Sigmoid colon (tissue), 7 donors: ENCODE measurements at regions of chr1 and their contacts with region 1.

Region 1: GRCh38 chr1:168603501-168604110 is 27.2 kb downstream of the XCL1 start:
- DNase-seq: peak; percentile 88
- H3K4me3 ChIP-seq: no peak overlapping the region
- H3K27ac ChIP-seq: peak overlapping the region in 1 of 4 donors; percentile 14
- H3K4me1 ChIP-seq: peaks cover 0 to 45% (median 15%) of the 10 kb centered on the region in 4 donors
- H3K27me3 ChIP-seq: no peaks in the 10 kb centered on the region
- CTCF ChIP-seq: peak; percentile 72 to 85 (median 79)
- EP300 ChIP-seq: no peak
- POLR2A ChIP-seq: no peak

Region 2: DNA sequence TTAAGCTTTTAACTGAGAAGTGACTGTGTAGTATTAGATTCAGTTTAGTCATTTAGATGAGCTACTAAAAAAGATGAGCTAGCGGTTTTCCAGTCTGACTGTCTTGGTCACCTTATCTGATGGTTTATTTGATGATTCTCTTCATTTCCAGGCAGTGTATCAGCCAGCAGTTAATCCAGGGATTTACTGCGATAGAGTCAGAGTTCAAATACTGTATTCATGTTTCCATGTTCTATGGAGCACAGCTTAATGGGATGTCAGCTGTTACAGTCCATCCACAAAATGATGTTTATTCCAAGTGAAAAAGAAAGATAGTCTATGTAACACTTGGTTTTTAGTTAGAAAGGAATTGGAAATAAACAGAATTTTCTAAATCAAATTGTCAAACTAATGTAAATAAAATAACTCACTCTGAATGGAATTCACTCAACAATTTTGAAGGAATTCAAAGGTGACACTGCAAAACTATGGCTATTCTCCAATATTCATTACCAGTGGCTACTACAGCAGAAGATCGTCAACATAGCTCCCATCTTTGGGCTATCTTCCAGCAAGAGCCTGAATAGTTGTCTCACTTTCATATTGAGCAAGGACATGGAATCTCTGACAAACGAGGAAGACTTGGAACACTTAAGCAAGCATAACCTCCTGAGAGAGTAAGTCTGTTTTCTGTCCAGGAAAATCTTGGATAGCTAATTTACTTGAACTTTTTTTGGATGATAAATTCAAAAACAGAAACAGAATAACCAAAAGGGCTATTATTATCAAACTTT is 180.0 kb after region 1 on chr1:
- intact Hi-C with region 1: loop called (anchors 10 kb)
- DNase-seq: peak; percentile 65
- H3K4me3 ChIP-seq: no peak overlapping the region
- H3K27ac ChIP-seq: peak overlapping the region; percentile 34 to 62 (median 58)
- H3K4me1 ChIP-seq: peaks cover 0 to 18% (median 7%) of the 10 kb centered on the region in 4 donors
- H3K27me3 ChIP-seq: no peaks in the 10 kb centered on the region
- CTCF ChIP-seq: no peak
- EP300 ChIP-seq: no peak
- POLR2A ChIP-seq: no peak

Region 3: GRCh38 chr1:168932539-168932938 is 328.9 kb after region 1 on chr1:
- intact Hi-C with region 1: no loop called
- DNase-seq: no peak
- H3K4me3 ChIP-seq: no peak overlapping the region
- H3K27ac ChIP-seq: no peak overlapping the region
- H3K4me1 ChIP-seq: no peaks in the 10 kb centered on the region
- H3K27me3 ChIP-seq: no peaks in the 10 kb centered on the region
- CTCF ChIP-seq: no peak
- EP300 ChIP-seq: no peak
- POLR2A ChIP-seq: no peak

Region 4: GRCh38 chr1:169201084-169201619 is 597.5 kb after region 1 on chr1:
- intact Hi-C with region 1: loop called (anchors 10 kb)
- DNase-seq: no peak
- H3K4me3 ChIP-seq: no peak overlapping the region
- H3K27ac ChIP-seq: no peak overlapping the region
- H3K4me1 ChIP-seq: no peaks in the 10 kb centered on the region
- H3K27me3 ChIP-seq: no peaks in the 10 kb centered on the region
- CTCF ChIP-seq: no peak
- EP300 ChIP-seq: no peak
- POLR2A ChIP-seq: no peak

Region 5: GRCh38 chr1:169348383-169349036 is 744.9 kb after region 1 on chr1:
- intact Hi-C with region 1: loop called (anchors 1 kb)
- DNase-seq: no peak
- H3K4me3 ChIP-seq: no peak overlapping the region
- H3K27ac ChIP-seq: no peak overlapping the region
- H3K4me1 ChIP-seq: peaks cover 0 to 16% (median 3%) of the 10 kb centered on the region in 4 donors
- H3K27me3 ChIP-seq: no peaks in the 10 kb centered on the region
- CTCF ChIP-seq: peak; percentile 46 to 78 (median 68)
- EP300 ChIP-seq: no peak
- POLR2A ChIP-seq: no peak